ENCODE measurements at regions of chr19 and their contacts with region 1.

Region 1: DNA sequence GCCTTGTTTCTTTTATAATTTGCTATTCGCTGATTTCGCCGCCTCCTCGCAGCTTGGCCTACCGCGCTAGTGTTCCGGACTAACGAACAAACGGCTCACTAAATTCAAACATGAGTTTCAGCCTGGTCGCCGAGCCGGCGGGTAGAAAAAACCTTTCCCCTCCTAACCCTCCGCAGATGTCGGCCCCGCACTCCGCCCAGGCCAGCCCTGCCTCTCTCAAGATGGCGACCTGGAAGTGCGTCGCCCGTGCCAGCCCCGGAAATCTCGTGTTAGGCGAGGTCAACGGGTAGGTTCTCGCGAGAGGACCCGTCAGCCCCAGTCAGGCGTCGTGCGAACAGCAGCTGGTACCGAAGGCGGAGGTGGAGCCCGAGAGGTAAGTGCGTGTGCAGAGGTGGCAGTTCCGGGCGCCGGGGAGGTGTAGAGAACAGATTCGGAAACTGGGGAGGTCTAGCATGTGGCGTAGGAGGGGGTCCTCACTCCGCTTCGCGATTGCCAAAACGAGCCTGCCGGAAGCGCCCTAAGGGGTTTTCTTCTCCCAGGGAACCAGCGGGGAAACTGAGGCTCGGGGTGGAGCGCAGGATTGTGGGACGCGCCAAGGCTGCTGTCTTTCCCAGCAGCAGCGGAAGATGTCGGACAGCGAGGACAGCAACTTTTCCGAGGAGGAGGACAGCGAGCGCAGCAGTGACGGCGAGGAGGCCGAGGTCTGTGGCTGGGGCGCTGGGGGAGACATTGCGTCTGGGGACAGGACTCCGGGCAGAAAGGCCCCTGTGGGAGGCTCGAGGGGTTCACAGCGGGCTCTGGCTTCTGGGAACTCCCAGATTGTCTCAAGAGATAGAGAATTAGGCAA is at the start of gene SUPT5H:
- DNase-seq: peak; percentile 100
- ATAC-seq: peak; percentile 94
- H3K4me3 ChIP-seq: peak within 1 kb of the TSS; percentile 34 to 56
- H3K27ac ChIP-seq: peak within 1 kb of the TSS; percentile 85
- H3K4me1 ChIP-seq: peaks cover 32% of the 10 kb centered on the region
- H3K27me3 ChIP-seq: no peaks in the 10 kb centered on the region
- CTCF ChIP-seq: no peak
- total RNA-seq, gene SUPT5H: 1,614 TPM

Region 2: DNA sequence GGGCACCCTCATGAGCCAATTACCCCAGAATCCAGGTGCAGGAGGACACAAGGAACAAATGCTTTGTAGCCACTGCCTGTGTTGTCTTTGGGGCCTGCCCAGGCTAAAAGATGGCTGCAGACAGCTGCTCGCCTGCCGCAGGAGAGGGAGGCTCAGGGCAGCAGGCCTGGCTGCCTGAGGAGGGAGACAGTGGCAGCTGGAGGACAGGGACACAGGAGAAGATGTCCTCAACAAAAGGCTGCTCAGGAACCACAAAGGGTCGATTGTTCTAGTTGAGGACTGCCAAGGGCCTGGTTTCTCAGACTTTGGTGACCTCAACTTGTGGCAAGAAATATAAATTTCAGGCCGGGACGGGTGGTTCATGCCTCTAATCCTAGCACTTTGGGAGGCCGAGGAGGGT is 553.7 kb before region 1 on chr19:
- CTCF ChIA-PET with region 1: no interaction called
- POLR2A ChIA-PET with region 1: interaction called, 10 read pairs
- in situ Hi-C with region 1: no loop called
- intact Hi-C with region 1: no loop called
- DNase-seq: no peak
- ATAC-seq: no peak
- H3K4me3 ChIP-seq: no peak overlapping the region
- H3K27ac ChIP-seq: no peak overlapping the region
- H3K4me1 ChIP-seq: no peaks in the 10 kb centered on the region
- H3K27me3 ChIP-seq: no peaks in the 10 kb centered on the region
- CTCF ChIP-seq: no peak

Region 3: DNA sequence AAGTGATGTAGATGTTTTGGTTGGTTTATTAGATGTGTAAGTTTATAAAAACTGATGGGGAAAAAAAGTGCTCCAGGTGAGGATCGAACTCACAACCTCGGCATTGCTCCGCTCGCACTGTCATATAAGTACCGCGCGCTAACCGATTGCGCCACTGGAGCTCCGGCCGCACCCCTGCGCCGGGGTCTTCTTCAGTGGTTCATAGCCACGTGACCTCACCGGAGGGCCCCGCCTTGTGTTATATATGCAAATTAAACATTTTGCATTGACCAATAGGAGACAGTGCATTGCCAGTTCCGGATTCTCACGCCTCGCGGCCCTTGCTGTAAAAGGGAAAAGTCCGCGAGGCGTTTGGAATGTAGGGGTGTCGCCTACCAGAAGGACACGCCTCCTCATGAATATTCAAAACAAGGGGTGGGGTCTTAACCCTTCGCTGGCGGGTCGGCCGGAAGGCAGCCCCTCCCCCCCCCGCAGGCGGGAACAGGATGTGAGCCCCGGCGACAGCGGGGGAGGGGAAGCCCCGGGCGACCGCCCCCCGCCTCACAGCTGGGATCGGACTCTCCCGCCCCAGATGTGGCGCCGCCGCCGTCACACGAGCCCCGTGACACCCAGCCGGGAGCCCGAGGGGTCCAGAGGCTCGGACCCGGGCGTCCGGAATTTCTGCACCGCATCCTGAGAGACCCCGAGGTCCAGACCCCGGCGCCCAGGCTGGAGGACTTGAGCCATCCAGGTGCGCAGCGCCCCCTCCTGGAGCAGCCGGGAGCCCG is 33.2 kb before region 1 on chr19 and contains the start of gene PLEKHG2:
- CTCF ChIA-PET with region 1: interaction called, 22 read pairs
- POLR2A ChIA-PET with region 1: interaction called, 12 read pairs
- in situ Hi-C with region 1: no loop called
- intact Hi-C with region 1: no loop called
- DNase-seq: peak; percentile 100
- ATAC-seq: peak; percentile 67
- H3K4me3 ChIP-seq: peak within 1 kb of the TSS; percentile 42 to 55
- H3K27ac ChIP-seq: peak within 1 kb of the TSS; percentile 92
- H3K4me1 ChIP-seq: peaks cover 58% of the 10 kb centered on the region
- H3K27me3 ChIP-seq: no peaks in the 10 kb centered on the region
- CTCF ChIP-seq: no peak
- total RNA-seq, gene PLEKHG2: 1,988 TPM

Region 4: DNA sequence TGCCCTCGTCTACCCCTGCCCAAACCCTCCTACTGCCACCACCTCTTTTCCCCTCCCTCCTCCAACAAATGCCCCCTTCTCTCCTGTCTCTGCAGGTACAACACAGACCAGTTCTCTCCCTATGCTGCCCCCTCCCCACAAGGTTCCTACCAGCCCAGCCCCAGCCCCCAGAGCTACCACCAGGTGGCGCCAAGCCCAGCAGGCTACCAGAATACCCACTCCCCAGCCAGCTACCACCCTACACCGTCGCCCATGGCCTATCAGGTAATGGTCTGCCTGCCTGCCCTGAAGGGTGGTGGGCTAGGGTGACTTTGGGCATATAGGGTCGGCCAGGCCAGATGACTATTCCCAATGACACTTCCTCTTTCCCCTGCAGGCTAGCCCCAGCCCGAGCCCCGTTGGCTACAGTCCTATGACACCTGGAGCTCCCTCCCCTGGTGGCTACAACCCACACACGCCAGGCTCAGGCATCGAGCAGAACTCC is 28.7 kb after region 1 on chr19:
- CTCF ChIA-PET with region 1: interaction called, 91 read pairs
- POLR2A ChIA-PET with region 1: interaction called, 12 read pairs
- in situ Hi-C with region 1: no loop called
- intact Hi-C with region 1: loop called (anchors 2 kb)
- DNase-seq: no peak
- ATAC-seq: peak; percentile 75
- H3K4me3 ChIP-seq: no peak overlapping the region
- H3K27ac ChIP-seq: no peak overlapping the region
- H3K4me1 ChIP-seq: no peaks in the 10 kb centered on the region
- H3K27me3 ChIP-seq: no peaks in the 10 kb centered on the region
- CTCF ChIP-seq: no peak

Region 5: DNA sequence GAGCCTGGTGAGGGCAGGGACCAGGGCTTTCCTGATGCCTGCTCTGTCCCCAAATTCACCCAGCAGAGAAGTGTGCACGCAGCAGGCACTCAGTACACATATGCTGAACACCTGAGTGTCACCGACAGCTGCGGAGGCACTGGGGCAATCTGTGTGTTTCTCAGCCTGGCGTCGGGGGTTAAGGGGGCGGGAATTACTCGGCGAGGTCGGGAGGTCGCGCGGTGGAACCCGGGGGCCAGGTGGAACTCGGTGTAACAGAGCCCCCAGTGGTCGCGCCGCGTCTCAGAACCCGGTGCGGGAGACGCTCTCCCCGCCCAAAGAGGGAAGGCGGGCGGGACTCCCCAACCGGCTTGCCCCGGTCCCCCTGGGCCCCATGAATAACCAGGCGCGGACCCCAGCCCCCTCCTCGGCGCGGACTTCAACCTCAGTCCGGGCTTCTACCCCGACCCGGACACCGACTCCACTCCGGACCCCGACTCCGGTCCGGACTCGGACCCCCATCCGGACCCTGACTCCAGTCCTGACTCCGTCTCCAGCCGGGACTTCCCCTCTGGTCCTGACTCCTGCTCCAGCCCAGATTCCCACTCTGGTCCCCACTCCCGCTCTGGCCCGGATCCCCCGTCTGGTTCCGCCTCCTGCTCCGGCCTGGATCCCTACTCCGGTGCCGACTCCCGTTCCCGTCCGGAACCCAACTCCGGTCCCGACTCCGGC is 69.5 kb after region 1 on chr19 and contains the start of gene SELENOV:
- CTCF ChIA-PET with region 1: interaction called, 49 read pairs
- POLR2A ChIA-PET with region 1: interaction called, 14 read pairs
- in situ Hi-C with region 1: no loop called
- intact Hi-C with region 1: no loop called
- DNase-seq: no peak
- ATAC-seq: peak; percentile 56
- H3K4me3 ChIP-seq: peak within 1 kb of the TSS; percentile 30 to 55
- H3K27ac ChIP-seq: peak within 1 kb of the TSS; percentile 5
- H3K4me1 ChIP-seq: peaks cover 26% of the 10 kb centered on the region
- H3K27me3 ChIP-seq: peaks cover 23% of the 10 kb centered on the region
- CTCF ChIP-seq: no peak
- total RNA-seq, gene SELENOV: 0.80 TPM

Region 6: GRCh38 chr19:39671738-39672363 is 226.4 kb after region 1 on chr19:
- CTCF ChIA-PET with region 1: interaction called, 45 read pairs
- POLR2A ChIA-PET with region 1: interaction called, 9 read pairs
- in situ Hi-C with region 1: no loop called
- intact Hi-C with region 1: loop called (anchors 1 kb)
- DNase-seq: peak; percentile 100
- ATAC-seq: peak; percentile 95
- H3K4me3 ChIP-seq: no peak overlapping the region
- H3K27ac ChIP-seq: no peak overlapping the region
- H3K4me1 ChIP-seq: peaks cover 11% of the 10 kb centered on the region
- H3K27me3 ChIP-seq: peaks cover 57% of the 10 kb centered on the region
- CTCF ChIP-seq: no peak

Region 7: GRCh38 chr19:39916851-39917396 is 471.4 kb after region 1 on chr19:
- CTCF ChIA-PET with region 1: interaction called, 13 read pairs
- POLR2A ChIA-PET with region 1: no interaction called
- in situ Hi-C with region 1: no loop called
- intact Hi-C with region 1: no loop called
- DNase-seq: no peak
- ATAC-seq: peak; percentile 7; the same call in 1 of the 2 replicates
- H3K4me3 ChIP-seq: no peak overlapping the region
- H3K27ac ChIP-seq: no peak overlapping the region
- H3K4me1 ChIP-seq: no peaks in the 10 kb centered on the region
- H3K27me3 ChIP-seq: no peaks in the 10 kb centered on the region
- CTCF ChIP-seq: no peak